Naive thymus-derived CD4-positive, alpha-beta T cell (primary cell): ENCODE measurements at regions of chr3 and their contacts with region 1.

Region 1: DNA sequence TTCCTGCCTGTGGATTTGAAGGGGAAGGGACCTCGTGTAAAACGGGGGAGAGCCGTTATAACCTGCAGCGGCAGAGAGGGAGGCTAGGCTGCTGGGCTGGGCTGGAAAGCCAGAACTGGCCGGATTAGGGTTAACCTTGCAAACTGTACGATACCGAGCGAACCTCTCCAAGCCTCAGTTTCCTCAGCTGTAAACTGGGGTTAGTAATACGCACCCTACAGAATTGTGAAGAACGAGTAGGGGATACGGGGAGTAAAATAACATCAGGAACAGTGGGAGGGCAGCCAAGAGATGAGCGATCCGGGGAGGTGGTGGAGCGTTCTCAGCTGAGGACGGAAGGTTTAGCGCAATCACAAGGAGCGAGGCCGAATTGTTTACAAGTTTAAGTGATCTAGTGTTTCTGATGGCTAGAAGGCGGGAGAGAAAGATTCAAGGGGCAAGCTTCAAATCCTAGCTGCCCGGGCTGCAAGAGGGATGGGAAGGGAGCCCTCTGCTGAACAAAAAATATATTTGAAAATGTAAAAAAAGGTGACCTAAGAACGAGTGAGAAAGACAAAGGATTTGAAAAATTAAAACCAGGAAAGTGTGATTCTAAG is 768 bp upstream of the SEMA5B start:
- DNase-seq: peak in 5 of 9 donors; percentile 19 to 36 (median 28)
- ATAC-seq: peak; percentile 40
- H3K4me3 ChIP-seq: peak overlapping the region; percentile 62
- H3K4me3 Mint-ChIP-seq: peak overlapping the region; percentile 76 to 93 (median 80)
- H3K27ac ChIP-seq: no peak overlapping the region
- H3K27ac Mint-ChIP-seq: no peak overlapping the region
- H3K4me1 ChIP-seq: peaks cover 2 to 10% of the 10 kb centered on the region in 2 donors
- H3K4me1 Mint-ChIP-seq: peaks cover 12 to 20% (median 17%) of the 10 kb centered on the region in 7 donors
- H3K27me3 ChIP-seq: peaks cover 7 to 13% of the 10 kb centered on the region in 2 donors
- H3K27me3 Mint-ChIP-seq: peaks cover 33 to 62% (median 35%) of the 10 kb centered on the region in 5 donors

Region 2: DNA sequence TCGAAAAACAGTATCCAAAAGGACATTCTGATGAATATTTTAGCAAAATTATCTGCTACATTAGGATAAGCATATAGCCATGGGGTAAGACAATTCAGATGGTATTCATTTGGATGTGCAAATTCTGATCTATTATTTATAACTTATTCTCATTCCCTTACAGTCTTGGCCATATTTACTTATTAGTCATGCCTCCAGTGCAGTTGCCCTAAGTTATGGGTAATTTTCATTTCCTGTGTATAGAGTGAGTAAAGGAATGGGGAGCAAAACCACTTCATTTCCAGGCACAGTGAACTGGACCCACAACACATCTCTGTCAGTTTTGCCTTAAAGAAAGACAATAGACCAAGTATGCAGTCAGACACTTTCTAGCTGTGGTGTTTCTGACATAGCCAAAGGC is 1616.8 kb before region 1 on chr3:
- CTCF ChIA-PET with region 1: no interaction called
- POLR2A ChIA-PET with region 1: no interaction called
- intact Hi-C with region 1: loop called in 1 of 2 experiments (anchors 5 kb)
- DNase-seq: no peak
- ATAC-seq: no peak
- H3K4me3 ChIP-seq: no peak overlapping the region
- H3K4me3 Mint-ChIP-seq: no peak overlapping the region
- H3K27ac ChIP-seq: no peak overlapping the region
- H3K27ac Mint-ChIP-seq: no peak overlapping the region
- H3K4me1 ChIP-seq: no peaks in the 10 kb centered on the region
- H3K4me1 Mint-ChIP-seq: no peaks in the 10 kb centered on the region
- H3K27me3 ChIP-seq: no peaks in the 10 kb centered on the region
- H3K27me3 Mint-ChIP-seq: peaks cover 0 to 22% (median 7%) of the 10 kb centered on the region in 5 donors

Region 3: DNA sequence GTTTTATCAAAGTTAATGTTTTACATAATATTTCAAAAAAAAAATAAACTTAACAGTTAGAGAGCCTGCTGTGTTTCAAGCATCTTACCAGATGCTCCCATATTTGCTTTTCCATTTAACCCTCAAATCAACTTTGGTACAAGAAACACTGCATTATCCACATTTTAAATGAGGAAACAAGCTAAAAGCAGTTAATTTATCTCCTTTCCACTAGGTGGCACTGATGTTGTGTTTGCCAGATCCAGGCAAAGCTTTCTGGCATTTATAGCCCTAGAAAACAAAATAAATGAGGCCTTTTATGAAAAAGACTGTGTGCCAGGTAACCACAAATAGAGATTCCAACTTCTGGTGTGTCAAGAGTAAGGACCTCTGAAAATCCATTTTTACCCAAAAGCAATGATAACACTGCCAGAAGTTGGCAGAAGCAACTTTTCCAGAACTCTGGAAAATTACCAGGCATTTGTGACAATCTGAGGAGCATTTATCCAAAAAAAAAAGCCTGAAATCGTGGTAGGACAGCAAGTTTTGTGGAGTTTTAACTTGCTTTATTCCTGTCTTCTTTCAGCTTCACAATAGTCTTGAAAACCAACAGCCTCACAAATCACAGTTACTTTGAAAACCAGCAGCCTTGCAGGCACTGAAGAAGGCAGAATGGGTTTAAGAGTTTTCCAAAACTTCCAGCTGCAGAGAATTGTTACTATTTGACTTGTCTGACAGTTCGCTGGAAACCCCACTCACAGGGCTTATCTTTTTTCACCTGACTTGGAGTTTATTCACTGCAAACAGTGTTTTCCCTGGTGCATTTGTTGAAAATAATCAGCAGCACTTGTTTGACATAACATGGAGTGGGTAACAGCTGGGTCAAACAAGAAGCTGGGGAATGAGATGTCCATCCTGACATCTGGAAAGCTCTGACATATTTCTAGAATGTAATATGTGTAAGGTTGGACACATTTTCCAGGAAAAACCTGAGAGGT is 635.2 kb before region 1 on chr3:
- CTCF ChIA-PET with region 1: interaction called, 4 read pairs
- POLR2A ChIA-PET with region 1: no interaction called
- intact Hi-C with region 1: loop called (anchors 1 to 2 kb)
- DNase-seq: peak in 7 of 9 donors; percentile 27 to 56 (median 46)
- ATAC-seq: peak; percentile 75
- H3K4me3 ChIP-seq: no peak overlapping the region
- H3K4me3 Mint-ChIP-seq: no peak overlapping the region
- H3K27ac ChIP-seq: no peak overlapping the region
- H3K27ac Mint-ChIP-seq: no peak overlapping the region
- H3K4me1 ChIP-seq: no peaks in the 10 kb centered on the region
- H3K4me1 Mint-ChIP-seq: peaks cover 7 to 36% (median 18%) of the 10 kb centered on the region in 7 donors
- H3K27me3 ChIP-seq: no peaks in the 10 kb centered on the region
- H3K27me3 Mint-ChIP-seq: no peaks in the 10 kb centered on the region

Region 4: DNA sequence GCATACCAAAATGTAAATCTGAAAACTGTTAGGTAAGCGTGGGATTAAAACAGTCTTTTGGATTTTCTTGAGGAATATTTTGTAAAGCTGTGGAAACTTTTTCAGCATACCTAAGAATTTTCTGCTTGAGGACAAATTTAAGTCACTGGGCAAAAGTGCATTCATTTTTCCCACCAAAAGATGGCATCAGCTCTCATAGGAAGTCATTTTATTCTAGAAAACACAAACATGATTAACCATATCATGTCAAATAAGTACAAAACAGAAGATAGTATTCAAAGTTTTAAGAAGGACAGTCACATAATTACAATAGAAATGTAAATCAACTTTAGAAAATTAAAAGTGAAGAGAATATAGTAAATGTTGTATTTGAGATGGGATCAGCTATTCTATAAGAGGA is 170.0 kb before region 1 on chr3:
- CTCF ChIA-PET with region 1: no interaction called
- POLR2A ChIA-PET with region 1: no interaction called
- intact Hi-C with region 1: loop called (anchors 2 to 5 kb)
- DNase-seq: no peak
- ATAC-seq: no peak
- H3K4me3 ChIP-seq: no peak overlapping the region
- H3K4me3 Mint-ChIP-seq: no peak overlapping the region
- H3K27ac ChIP-seq: no peak overlapping the region
- H3K27ac Mint-ChIP-seq: no peak overlapping the region
- H3K4me1 ChIP-seq: no peaks in the 10 kb centered on the region
- H3K4me1 Mint-ChIP-seq: peaks cover 0 to 2% (median 0%) of the 10 kb centered on the region in 7 donors
- H3K27me3 ChIP-seq: no peaks in the 10 kb centered on the region
- H3K27me3 Mint-ChIP-seq: no peaks in the 10 kb centered on the region

Region 5: DNA sequence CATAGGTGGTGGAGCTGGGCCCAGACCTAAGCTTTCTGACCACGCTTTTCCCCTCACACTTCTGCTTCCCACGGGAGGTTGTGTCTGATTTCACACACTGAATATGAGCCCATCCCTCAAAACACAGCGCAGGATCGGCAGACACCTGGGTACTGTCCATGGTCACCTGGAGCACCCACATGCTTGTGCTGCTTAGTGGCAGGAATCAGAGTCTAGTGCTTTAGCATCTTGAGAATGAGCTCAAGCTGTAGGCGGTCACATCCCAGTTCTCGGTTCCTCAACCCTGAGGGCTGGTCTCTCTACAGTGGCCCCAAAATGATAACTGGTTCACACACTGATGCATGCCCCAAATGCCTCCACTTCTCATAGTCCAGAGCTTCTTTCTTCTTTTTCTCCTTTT is 111.8 kb before region 1 on chr3:
- CTCF ChIA-PET with region 1: no interaction called
- POLR2A ChIA-PET with region 1: no interaction called
- intact Hi-C with region 1: no loop called
- DNase-seq: no peak
- ATAC-seq: no peak
- H3K4me3 ChIP-seq: no peak overlapping the region
- H3K4me3 Mint-ChIP-seq: no peak overlapping the region
- H3K27ac ChIP-seq: no peak overlapping the region
- H3K27ac Mint-ChIP-seq: no peak overlapping the region
- H3K4me1 ChIP-seq: no peaks in the 10 kb centered on the region
- H3K4me1 Mint-ChIP-seq: peaks cover 0 to 15% (median 8%) of the 10 kb centered on the region in 7 donors
- H3K27me3 ChIP-seq: peaks cover 0 to 4% of the 10 kb centered on the region in 2 donors
- H3K27me3 Mint-ChIP-seq: peaks cover 16 to 44% (median 32%) of the 10 kb centered on the region in 5 donors

Region 6: GRCh38 chr3:122942937-122943827 is 85.1 kb before region 1 on chr3:
- CTCF ChIA-PET with region 1: no interaction called
- POLR2A ChIA-PET with region 1: no interaction called
- intact Hi-C with region 1: loop called in 1 of 2 experiments (anchors 2 kb)
- DNase-seq: peak in 1 of 9 donors; percentile 57
- ATAC-seq: peak; percentile 21
- H3K4me3 ChIP-seq: no peak overlapping the region
- H3K4me3 Mint-ChIP-seq: peak overlapping the region in 1 of 10 donors; percentile 39
- H3K27ac ChIP-seq: no peak overlapping the region
- H3K27ac Mint-ChIP-seq: no peak overlapping the region
- H3K4me1 ChIP-seq: peaks cover 0 to 13% of the 10 kb centered on the region in 2 donors
- H3K4me1 Mint-ChIP-seq: peaks cover 0 to 3% (median 0%) of the 10 kb centered on the region in 7 donors
- H3K27me3 ChIP-seq: no peaks in the 10 kb centered on the region
- H3K27me3 Mint-ChIP-seq: peaks cover 0 to 13% (median 6%) of the 10 kb centered on the region in 5 donors

Region 7: GRCh38 chr3:123053106-123053505 is 24.8 kb after region 1 on chr3:
- CTCF ChIA-PET with region 1: no interaction called
- POLR2A ChIA-PET with region 1: no interaction called
- intact Hi-C with region 1: no loop called
- DNase-seq: no peak
- ATAC-seq: no peak
- H3K4me3 ChIP-seq: no peak overlapping the region
- H3K4me3 Mint-ChIP-seq: no peak overlapping the region
- H3K27ac ChIP-seq: no peak overlapping the region
- H3K27ac Mint-ChIP-seq: no peak overlapping the region
- H3K4me1 ChIP-seq: no peaks in the 10 kb centered on the region
- H3K4me1 Mint-ChIP-seq: no peaks in the 10 kb centered on the region
- H3K27me3 ChIP-seq: no peaks in the 10 kb centered on the region
- H3K27me3 Mint-ChIP-seq: peaks cover 0 to 30% (median 0%) of the 10 kb centered on the region in 5 donors

Region 8: GRCh38 chr3:123258811-123259420 is 230.6 kb after region 1 on chr3:
- CTCF ChIA-PET with region 1: no interaction called
- POLR2A ChIA-PET with region 1: no interaction called
- intact Hi-C with region 1: loop called in 1 of 2 experiments (anchors 2 kb)
- DNase-seq: peak in 5 of 9 donors; percentile 13 to 32 (median 21)
- ATAC-seq: peak; percentile 78
- H3K4me3 ChIP-seq: no peak overlapping the region
- H3K4me3 Mint-ChIP-seq: no peak overlapping the region
- H3K27ac ChIP-seq: no peak overlapping the region
- H3K27ac Mint-ChIP-seq: peak overlapping the region in 1 of 9 donors; percentile 74
- H3K4me1 ChIP-seq: no peaks in the 10 kb centered on the region
- H3K4me1 Mint-ChIP-seq: peaks cover 0 to 11% (median 0%) of the 10 kb centered on the region in 7 donors
- H3K27me3 ChIP-seq: no peaks in the 10 kb centered on the region
- H3K27me3 Mint-ChIP-seq: no peaks in the 10 kb centered on the region